Right ventricle myocardium superior (tissue), 1 donor: ENCODE measurements at regions of chr18 and their contacts with region 1.

Region 1: DNA sequence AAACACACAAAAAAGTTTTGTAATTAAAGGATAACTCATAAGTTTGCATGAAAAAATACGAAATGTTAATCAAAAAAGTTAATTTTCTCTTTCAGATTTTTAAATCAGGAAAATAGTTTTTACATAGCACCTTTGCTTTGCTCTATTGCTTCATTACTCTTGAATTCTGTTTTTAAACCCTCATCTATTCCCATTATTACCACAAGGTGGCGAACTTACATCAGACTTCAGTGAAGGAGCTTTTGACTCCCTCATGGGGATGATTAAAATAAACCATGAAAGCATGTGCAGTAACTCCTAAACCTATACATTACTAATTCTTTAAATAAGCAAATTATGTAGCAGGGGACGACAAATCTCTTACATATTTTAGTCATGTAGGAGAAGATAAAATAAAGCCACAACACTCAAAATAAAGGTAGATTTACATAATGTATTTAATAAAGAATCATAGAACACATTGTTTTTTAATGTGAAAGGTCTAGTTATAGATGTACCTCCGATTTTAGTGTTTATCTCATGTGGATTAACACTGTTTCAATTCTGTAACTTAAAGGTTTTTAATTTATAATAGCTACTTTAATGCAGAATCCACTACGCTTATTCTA is 105.2 kb downstream of the NETO1 start:
- DNase-seq: no peak
- ATAC-seq: peak; percentile 49

Region 2: DNA sequence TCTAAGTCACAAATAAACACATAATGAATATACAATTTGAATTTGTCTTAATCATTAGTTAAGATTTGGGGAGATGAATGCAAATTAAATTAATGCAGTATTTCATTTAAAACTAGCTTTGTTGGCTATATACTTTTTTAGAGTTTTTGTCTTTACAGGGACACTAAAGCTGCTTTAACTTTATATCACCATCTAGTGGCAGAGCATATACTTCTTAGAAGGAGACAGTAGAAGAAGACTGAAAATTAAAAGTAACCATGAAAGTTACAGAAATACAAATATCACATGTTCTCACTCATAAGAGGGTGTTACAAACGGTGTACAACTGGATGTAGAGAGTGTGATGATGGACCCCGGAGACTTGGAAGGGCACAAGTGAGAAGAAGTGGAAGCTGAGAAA is 373.5 kb after region 1 on chr18:
- intact Hi-C with region 1: loop called (anchors 10 kb)
- DNase-seq: no peak
- ATAC-seq: no peak

Region 3: GRCh38 chr18:73842795-73843394 is 1080.3 kb after region 1 on chr18:
- intact Hi-C with region 1: loop called (anchors 5 kb)
- DNase-seq: peak; percentile 43
- ATAC-seq: no peak

Region 4: DNA sequence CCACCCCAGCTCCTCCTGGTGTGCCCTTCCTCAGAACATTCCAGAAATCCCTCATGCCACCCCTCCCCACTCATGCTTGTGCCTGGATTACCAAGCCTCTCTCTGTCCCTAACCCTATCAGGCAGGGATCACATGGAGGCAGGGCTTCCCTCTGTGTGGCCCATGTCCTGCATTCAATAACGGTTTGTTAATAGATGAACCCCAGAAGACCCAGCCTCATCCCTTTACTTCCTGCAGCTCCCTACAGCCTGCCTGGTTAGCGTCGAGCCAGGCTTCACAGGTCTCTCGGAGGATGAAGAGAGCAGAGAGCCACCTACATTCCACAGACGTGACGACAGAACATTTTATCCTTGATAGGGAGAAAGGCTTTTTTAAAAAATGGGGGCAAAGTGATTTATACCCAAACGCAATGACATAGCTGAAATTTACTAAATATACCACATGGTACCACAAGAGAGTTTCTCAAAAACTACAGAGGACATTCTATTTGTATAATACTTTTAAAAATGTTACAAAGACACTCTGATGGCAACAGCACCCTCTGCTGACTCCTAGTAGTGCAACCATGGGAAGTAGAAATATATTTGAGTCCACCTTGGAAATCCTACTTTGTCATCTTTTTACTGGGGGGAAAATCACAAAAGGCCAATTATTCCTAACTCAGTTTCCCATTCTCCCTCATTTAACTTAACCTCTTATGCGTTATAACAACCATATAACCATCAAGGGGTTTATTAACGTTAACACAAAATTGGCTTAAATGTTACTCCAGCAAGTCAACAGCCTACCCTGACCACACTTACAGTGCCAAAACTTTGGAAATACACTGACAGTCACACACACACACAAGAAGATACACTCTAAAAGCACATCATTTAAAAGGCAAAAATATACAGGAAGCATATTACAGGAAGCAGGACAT is 1354.3 kb after region 1 on chr18:
- intact Hi-C with region 1: loop called (anchors 10 kb)
- DNase-seq: no peak
- ATAC-seq: no peak